AG04449 (cell line): ENCODE measurements at regions of chr10 and their contacts with region 1.

Region 1: DNA sequence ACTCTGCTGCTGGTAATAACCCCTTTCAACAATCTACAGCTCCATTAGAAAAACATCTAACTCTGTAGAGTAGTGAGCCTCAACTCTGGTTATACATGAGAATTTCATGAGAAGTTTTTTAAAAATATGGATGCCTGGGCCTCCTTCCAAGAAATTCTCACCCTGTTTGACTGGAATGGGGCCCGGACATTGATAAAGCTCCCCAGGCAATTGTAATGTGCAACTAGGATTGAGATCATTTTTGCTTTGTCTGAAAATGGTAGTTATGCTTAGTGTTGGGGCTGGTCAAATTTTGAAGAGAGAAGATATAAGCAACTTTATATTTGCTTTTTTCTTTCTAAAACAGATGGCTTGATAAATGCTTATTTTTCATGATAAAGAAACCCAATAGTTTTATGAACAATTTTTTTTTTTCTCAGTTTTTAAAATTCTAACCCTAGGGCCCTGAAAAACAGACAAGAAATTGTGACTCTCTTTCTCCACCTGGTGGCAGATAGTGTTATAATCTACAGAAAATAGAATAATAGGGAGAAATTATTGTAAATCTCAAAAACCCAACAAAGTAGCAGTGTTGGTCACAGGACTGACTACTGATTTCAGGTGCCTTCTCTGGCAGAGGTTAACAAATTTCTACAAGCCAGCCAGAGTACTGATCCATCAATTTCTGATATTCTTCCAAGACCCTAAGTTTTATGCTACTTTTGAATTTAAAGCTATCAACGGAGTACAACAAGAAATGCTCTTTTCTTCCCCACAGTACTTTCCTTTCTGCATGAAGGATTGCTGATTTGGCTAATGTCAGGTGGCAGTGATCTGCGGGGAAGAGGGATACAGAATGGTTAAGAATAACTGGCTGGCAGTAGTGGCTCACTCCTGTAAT is 174.8 kb downstream of the DKK1 start:
- DNase-seq: no peak
- H3K4me3 ChIP-seq: no peak overlapping the region
- CTCF ChIP-seq: peak; percentile 14

Region 2: GRCh38 chr10:52313933-52314816 is 174.7 kb before region 1 on chr10 and contains the start of gene DKK1:
- CTCF ChIA-PET with region 1: interaction called, 462 read pairs
- POLR2A ChIA-PET with region 1: interaction called, 110 read pairs
- DNase-seq: no peak
- H3K4me3 ChIP-seq: peak within 1 kb of the TSS; percentile 93
- CTCF ChIP-seq: peak; percentile 93

Region 3: GRCh38 chr10:52322936-52323335 is 165.9 kb before region 1 on chr10:
- CTCF ChIA-PET with region 1: interaction called, 462 read pairs
- POLR2A ChIA-PET with region 1: interaction called, 110 read pairs
- DNase-seq: no peak
- H3K4me3 ChIP-seq: no peak overlapping the region
- CTCF ChIP-seq: no peak

Region 4: DNA sequence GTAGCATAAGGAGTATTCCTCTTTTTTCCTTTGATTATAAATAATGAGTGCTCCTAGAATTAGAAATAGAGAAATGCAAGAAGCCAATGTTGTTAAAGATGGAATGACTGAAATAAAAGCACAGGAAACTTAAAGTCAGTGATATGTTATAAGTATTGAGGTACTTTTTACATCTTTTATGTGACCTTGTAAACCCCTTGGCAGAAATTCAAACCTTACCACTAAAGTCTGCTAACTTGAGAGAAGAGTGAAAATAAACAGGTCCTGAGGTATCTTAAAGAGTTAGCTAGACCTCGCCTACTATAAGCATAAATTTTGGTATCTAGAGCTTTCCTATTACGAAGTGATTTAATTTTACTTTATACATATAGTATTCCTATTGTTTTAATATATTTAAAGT is 13.4 kb after region 1 on chr10:
- CTCF ChIA-PET with region 1: interaction called, 27 read pairs
- POLR2A ChIA-PET with region 1: no interaction called
- DNase-seq: no peak
- H3K4me3 ChIP-seq: no peak overlapping the region
- CTCF ChIP-seq: no peak

Region 5: DNA sequence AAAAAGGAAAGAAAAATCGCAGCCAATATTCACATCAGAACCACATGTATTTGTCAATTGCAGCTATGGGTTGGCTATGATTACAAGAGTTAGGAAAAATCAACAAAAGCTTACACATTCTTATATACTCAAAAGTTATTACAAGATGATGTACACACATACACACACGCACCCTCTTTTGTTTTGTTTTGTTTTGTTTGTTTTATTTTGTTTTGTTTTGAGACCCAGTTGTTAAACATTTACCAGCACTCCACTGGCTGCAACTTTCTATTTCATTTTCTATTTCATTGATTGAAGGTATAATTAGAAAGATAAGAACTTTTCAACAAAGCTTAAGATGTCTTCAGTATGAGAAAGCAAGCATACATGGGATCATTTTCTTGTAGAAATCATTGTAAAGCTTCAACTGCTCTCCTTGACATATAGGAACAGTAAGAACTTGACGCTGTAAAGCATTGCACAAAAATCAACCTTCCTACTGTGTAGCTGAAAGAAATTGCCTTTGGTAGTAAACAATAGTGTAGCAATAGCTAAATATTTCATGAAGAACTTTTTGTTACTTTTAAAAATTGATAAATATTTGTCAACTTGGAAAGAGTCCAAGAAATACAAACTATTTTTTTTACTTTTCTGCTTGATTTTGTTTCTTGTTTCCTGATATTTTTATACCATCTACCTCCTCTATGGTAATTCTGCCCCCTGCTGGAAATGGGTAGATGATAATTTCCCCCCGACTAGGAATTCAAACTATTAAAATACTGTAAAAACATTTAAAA is 77.8 kb after region 1 on chr10:
- CTCF ChIA-PET with region 1: interaction called, 66 read pairs
- POLR2A ChIA-PET with region 1: no interaction called
- DNase-seq: no peak
- H3K4me3 ChIP-seq: no peak overlapping the region
- CTCF ChIP-seq: peak; percentile 13